Right ventricle myocardium superior (tissue), 1 donor: ENCODE measurements at regions of chr1 and their contacts with region 1.

Region 1: DNA sequence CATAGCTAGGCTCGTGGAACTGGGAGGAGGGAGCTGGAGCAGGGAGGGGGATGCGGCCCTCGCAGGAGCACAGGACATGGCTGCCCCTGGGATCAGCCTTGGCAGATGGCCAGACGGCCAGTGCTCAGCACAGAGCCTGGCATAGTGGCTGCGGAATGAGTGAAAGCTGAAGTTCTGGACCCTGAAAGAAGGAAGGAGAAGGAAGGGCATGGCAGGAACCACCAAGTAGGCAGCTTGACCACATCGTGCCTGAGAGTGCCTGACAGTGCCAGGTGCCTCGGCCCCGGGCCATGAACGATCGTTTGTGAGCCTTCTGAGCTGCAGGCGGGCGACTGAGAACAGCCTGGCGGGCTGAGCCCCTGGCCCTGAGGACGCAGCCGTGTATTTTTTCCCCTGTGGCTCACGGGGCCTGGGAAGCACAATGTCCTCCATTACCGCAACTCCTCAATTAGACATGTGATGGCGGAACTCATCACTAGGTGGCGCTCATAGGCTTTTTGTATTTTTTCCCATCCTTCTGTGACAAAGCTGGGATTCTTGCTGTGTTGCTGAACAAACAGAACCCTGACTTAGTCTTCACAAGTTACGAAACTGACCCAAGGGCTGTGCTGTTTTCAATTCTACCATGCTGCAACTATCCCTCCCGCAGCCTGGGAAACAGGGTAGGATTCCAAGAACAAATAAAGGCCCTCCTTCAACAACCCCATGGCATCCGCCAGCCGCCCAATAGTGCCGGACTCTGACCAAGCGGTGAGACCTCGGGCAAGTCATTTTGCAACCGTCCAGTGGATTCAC is 29.9 kb upstream of the TMEM61 start:
- DNase-seq: peak; percentile 74
- ATAC-seq: peak; percentile 95

Region 2: GRCh38 chr1:54764133-54764921 is 186.2 kb before region 1 on chr1 and contains the start of gene PARS2:
- intact Hi-C with region 1: no loop called
- DNase-seq: peak; percentile 97
- ATAC-seq: peak; percentile 98
- total RNA-seq, gene PARS2: 4.0 TPM

Region 3: GRCh38 chr1:54996359-54996868 is 45.8 kb after region 1 on chr1:
- intact Hi-C with region 1: loop called (anchors 5 kb)
- DNase-seq: peak; percentile 81
- ATAC-seq: peak; percentile 87